HCT116 (cell line): ENCODE measurements at regions of chr18 and their contacts with region 1.

Region 1: GRCh38 chr18:22800551-22800951 is 132.6 kb upstream of the RBBP8 start:
- DNase-seq: no peak
- ATAC-seq: no peak
- H3K4me3 ChIP-seq: no peak overlapping the region
- H3K27ac ChIP-seq: no peak overlapping the region
- H3K4me1 ChIP-seq: peaks cover 0 to 4% of the 10 kb centered on the region in 2 experiments; a peak in 2 of 4 replicates
- H3K27me3 ChIP-seq: no peaks in the 10 kb centered on the region
- CTCF ChIP-seq: no peak
- POLR2A ChIP-seq: no peak
- RAD21 ChIP-seq: no peak

Region 2: GRCh38 chr18:21914739-21915319 is 885.7 kb before region 1 on chr18:
- CTCF ChIA-PET with region 1: no interaction called
- POLR2A ChIA-PET with region 1: no interaction called
- RAD21 ChIA-PET with region 1: no interaction called
- intact Hi-C with region 1: loop called (anchors 5 kb)
- DNase-seq: peak; percentile 59
- ATAC-seq: peak; percentile 95
- H3K4me3 ChIP-seq: no peak overlapping the region
- H3K27ac ChIP-seq: no peak overlapping the region
- H3K4me1 ChIP-seq: no peaks in the 10 kb centered on the region
- H3K27me3 ChIP-seq: no peaks in the 10 kb centered on the region
- CTCF ChIP-seq: peak; percentile 67 to 92 (median 80)
- POLR2A ChIP-seq: no peak
- RAD21 ChIP-seq: peak; percentile 90

Region 3: DNA sequence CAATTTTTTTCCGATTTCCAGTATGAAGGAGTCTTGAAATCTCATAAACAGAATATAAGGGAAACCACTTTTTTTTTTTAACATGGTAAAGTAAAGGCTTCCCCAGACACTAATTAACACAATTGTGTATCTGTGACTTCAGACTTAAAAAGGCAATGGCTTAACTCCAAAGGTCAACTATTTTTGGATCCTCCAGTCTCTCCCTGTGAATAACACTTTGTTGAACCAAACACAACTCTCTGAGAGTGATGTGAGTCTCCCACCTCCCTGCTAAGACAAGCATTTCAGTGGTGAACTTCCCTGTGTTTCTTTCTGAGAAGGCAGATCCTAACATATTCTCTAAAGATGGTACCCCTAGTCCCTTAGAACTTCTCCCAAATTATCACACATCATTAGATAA is 87.0 kb before region 1 on chr18:
- CTCF ChIA-PET with region 1: no interaction called
- POLR2A ChIA-PET with region 1: no interaction called
- RAD21 ChIA-PET with region 1: no interaction called
- intact Hi-C with region 1: no loop called
- DNase-seq: no peak
- ATAC-seq: no peak
- H3K4me3 ChIP-seq: no peak overlapping the region
- H3K27ac ChIP-seq: no peak overlapping the region
- H3K4me1 ChIP-seq: no peaks in the 10 kb centered on the region
- H3K27me3 ChIP-seq: no peaks in the 10 kb centered on the region
- CTCF ChIP-seq: no peak
- POLR2A ChIP-seq: no peak
- RAD21 ChIP-seq: no peak

Region 4: GRCh38 chr18:22813648-22814328 is 13.2 kb after region 1 on chr18:
- CTCF ChIA-PET with region 1: interaction called, 19 read pairs
- POLR2A ChIA-PET with region 1: interaction called, 3 read pairs
- RAD21 ChIA-PET with region 1: interaction called, 3 to 11 read pairs
- intact Hi-C with region 1: no loop called
- DNase-seq: no peak
- ATAC-seq: peak; percentile 74
- H3K4me3 ChIP-seq: no peak overlapping the region
- H3K27ac ChIP-seq: peak overlapping the region; percentile 67
- H3K4me1 ChIP-seq: peaks cover 41 to 43% of the 10 kb centered on the region in 2 experiments
- H3K27me3 ChIP-seq: no peaks in the 10 kb centered on the region
- CTCF ChIP-seq: peak; percentile 65 to 84 (median 83)
- POLR2A ChIP-seq: no peak
- RAD21 ChIP-seq: peak; percentile 97

Region 5: GRCh38 chr18:22983175-22983574 is 182.6 kb after region 1 on chr18:
- CTCF ChIA-PET with region 1: interaction called, 37 read pairs
- POLR2A ChIA-PET with region 1: no interaction called
- RAD21 ChIA-PET with region 1: interaction called, 3 to 4 read pairs
- intact Hi-C with region 1: loop called (anchors 1 kb)
- DNase-seq: peak; percentile 24
- ATAC-seq: peak; percentile 57; the same call in 1 of the 2 replicates
- H3K4me3 ChIP-seq: no peak overlapping the region
- H3K27ac ChIP-seq: no peak overlapping the region
- H3K4me1 ChIP-seq: peaks cover 6 to 8% of the 10 kb centered on the region in 2 experiments
- H3K27me3 ChIP-seq: no peaks in the 10 kb centered on the region
- CTCF ChIP-seq: peak; percentile 36 to 65 (median 64); a peak in 4 of 6 replicates
- POLR2A ChIP-seq: no peak
- RAD21 ChIP-seq: peak; percentile 77

Region 6: GRCh38 chr18:23032030-23032582 is 231.6 kb after region 1 on chr18:
- CTCF ChIA-PET with region 1: interaction called, 13 read pairs
- POLR2A ChIA-PET with region 1: no interaction called
- RAD21 ChIA-PET with region 1: interaction called in 1 of 2 experiments, 3 read pairs
- intact Hi-C with region 1: no loop called
- DNase-seq: no peak
- ATAC-seq: peak; percentile 31; the same call in 1 of the 2 replicates
- H3K4me3 ChIP-seq: no peak overlapping the region
- H3K27ac ChIP-seq: no peak overlapping the region
- H3K4me1 ChIP-seq: peaks cover 3 to 16% of the 10 kb centered on the region in 2 experiments; a peak in 3 of 4 replicates
- H3K27me3 ChIP-seq: no peaks in the 10 kb centered on the region
- CTCF ChIP-seq: no peak
- POLR2A ChIP-seq: no peak
- RAD21 ChIP-seq: no peak

Region 7: GRCh38 chr18:23131693-23132319 is 331.3 kb after region 1 on chr18:
- CTCF ChIA-PET with region 1: interaction called, 3 read pairs
- POLR2A ChIA-PET with region 1: interaction called, 7 read pairs
- RAD21 ChIA-PET with region 1: no interaction called
- intact Hi-C with region 1: loop called (anchors 5 kb)
- DNase-seq: peak; percentile 73
- ATAC-seq: peak; percentile 43
- H3K4me3 ChIP-seq: no peak overlapping the region
- H3K27ac ChIP-seq: no peak overlapping the region
- H3K4me1 ChIP-seq: peaks cover 18 to 34% of the 10 kb centered on the region in 2 experiments
- H3K27me3 ChIP-seq: no peaks in the 10 kb centered on the region
- CTCF ChIP-seq: peak; percentile 71 to 83 (median 77)
- POLR2A ChIP-seq: no peak
- RAD21 ChIP-seq: peak; percentile 82

Region 8: GRCh38 chr18:23194155-23194996 is 393.8 kb after region 1 on chr18:
- CTCF ChIA-PET with region 1: no interaction called
- POLR2A ChIA-PET with region 1: no interaction called
- RAD21 ChIA-PET with region 1: no interaction called
- intact Hi-C with region 1: no loop called
- DNase-seq: no peak
- ATAC-seq: no peak
- H3K4me3 ChIP-seq: no peak overlapping the region
- H3K27ac ChIP-seq: no peak overlapping the region
- H3K4me1 ChIP-seq: no peaks in the 10 kb centered on the region
- H3K27me3 ChIP-seq: no peaks in the 10 kb centered on the region
- CTCF ChIP-seq: no peak
- POLR2A ChIP-seq: no peak
- RAD21 ChIP-seq: no peak